ENCODE measurements at regions of chr19 and their contacts with region 1.

Region 1: DNA sequence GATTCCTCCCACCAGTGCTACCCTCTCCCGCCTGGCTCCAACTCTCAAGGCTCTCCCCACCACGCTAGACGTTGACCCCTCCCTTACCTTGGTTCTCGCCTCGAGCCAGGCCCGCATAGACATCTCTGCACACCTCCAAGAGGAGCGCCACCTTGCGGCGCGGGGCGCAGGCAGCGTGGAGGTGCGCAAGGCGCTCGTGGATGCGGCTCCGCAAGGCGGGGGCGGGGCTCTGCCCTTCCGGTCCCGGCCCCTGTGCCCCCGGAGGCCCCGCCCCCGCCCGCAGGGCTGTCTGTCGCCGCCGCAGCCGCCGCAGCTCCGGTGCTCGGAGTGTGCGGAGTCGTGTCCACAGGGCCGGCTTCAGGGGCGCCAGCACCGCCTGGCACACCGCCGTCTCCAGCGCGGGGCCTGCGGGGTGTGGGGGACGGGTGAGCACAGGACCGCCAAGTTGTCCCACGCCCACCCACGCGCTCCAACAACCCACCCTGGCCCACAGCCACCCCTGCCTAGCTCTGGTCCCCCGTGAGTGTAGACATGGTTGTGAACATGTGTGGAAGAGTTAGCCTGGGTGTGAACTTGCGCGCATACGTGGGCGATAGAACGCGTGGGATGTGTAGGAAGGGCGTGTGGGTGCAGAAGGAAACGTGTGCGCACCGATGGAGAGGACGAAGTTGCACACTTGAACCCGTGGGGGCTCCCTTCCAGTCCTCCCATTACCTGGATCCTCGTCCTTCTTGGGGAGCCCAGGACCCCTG is 8.0 kb downstream of the RINL start:
- DNase-seq: no peak
- H3K4me3 ChIP-seq: peak overlapping the region; percentile 37
- H3K27me3 ChIP-seq: no peaks in the 10 kb centered on the region
- CTCF ChIP-seq: peak; percentile 86

Region 2: GRCh38 chr19:38851622-38852230 is 18.3 kb before region 1 on chr19:
- CTCF ChIA-PET with region 1: interaction called, 16 read pairs
- POLR2A ChIA-PET with region 1: no interaction called
- DNase-seq: no peak
- H3K4me3 ChIP-seq: peak overlapping the region; percentile 90
- H3K27me3 ChIP-seq: no peaks in the 10 kb centered on the region
- CTCF ChIP-seq: no peak

Region 3: GRCh38 chr19:38856813-38857212 is 13.2 kb before region 1 on chr19:
- CTCF ChIA-PET with region 1: interaction called, 16 read pairs
- POLR2A ChIA-PET with region 1: no interaction called
- DNase-seq: no peak
- H3K4me3 ChIP-seq: no peak overlapping the region
- H3K27me3 ChIP-seq: no peaks in the 10 kb centered on the region
- CTCF ChIP-seq: no peak

Region 4: DNA sequence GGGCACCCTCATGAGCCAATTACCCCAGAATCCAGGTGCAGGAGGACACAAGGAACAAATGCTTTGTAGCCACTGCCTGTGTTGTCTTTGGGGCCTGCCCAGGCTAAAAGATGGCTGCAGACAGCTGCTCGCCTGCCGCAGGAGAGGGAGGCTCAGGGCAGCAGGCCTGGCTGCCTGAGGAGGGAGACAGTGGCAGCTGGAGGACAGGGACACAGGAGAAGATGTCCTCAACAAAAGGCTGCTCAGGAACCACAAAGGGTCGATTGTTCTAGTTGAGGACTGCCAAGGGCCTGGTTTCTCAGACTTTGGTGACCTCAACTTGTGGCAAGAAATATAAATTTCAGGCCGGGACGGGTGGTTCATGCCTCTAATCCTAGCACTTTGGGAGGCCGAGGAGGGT is 21.7 kb after region 1 on chr19:
- CTCF ChIA-PET with region 1: interaction called, 21 read pairs
- POLR2A ChIA-PET with region 1: no interaction called
- DNase-seq: no peak
- H3K4me3 ChIP-seq: no peak overlapping the region
- H3K27me3 ChIP-seq: no peaks in the 10 kb centered on the region
- CTCF ChIP-seq: no peak

Region 5: GRCh38 chr19:38905620-38906019 is 35.6 kb after region 1 on chr19:
- CTCF ChIA-PET with region 1: no interaction called
- POLR2A ChIA-PET with region 1: no interaction called
- DNase-seq: no peak
- H3K4me3 ChIP-seq: no peak overlapping the region
- H3K27me3 ChIP-seq: no peaks in the 10 kb centered on the region
- CTCF ChIP-seq: no peak

Region 6: DNA sequence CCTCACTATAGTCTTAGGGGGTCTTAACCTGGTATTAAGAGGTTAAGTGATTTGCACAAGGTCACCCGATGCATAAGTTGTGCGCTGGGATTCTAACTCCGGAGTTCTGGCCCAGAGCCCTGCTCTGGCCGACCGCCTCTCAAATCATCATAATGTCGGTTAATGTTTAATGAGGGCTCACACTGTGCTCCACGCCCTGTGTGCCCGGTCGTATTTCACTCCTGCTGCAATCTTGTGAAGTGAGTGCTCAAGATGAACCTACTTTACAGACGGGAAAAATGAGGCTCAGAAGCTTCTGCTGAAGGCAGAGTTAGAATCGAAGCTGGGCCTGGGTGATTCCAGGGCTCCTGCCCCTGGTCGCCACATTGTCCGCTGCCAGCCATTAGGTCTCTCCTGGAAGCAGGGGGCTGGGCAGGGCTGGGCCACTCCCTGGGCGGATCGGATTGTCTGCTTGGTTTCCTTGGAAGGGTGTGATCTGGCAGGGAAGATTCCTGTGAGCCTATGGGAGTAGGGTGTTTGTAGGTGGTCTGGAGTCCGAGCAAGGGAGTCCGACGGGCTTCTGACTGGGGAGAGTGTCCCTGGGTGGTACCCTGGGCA is 256.7 kb after region 1 on chr19:
- CTCF ChIA-PET with region 1: no interaction called
- POLR2A ChIA-PET with region 1: no interaction called
- DNase-seq: no peak
- H3K4me3 ChIP-seq: peak overlapping the region; percentile 93
- H3K27me3 ChIP-seq: no peaks in the 10 kb centered on the region
- CTCF ChIP-seq: no peak